HCT116 (cell line): ENCODE measurements at regions of chr7 and their contacts with region 1.

Region 1: DNA sequence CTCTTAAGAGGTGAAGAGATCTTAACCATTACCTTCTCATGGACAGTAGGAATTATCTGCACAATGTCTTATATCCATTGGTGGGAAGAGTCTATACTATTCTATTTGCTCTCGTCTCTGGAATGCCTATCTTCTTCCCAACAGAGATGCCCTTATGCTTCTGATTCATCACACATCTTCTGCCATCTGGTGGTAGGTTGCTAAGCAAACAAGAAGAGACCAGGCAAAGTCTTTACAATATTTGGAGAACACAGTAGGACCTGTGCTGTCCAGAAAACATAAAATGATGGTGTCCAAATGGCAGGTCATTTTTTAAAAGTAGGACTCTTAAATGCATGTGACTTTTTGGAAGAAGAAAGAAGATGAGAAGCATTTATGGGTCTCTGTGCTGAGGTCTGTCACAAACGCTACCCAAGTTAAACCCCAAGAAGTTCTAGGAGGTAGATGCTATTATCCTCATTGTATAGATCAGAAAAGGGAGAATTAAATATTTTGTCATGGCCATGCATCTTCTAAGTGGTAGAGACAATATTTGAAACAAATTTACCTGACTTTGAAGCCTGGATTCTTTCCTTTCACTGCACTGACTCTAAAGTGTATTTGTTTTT is 67.8 kb upstream of the NXPH1 start:
- DNase-seq: peak; percentile 35
- ATAC-seq: peak; percentile 95
- H3K4me3 ChIP-seq: no peak overlapping the region
- H3K27ac ChIP-seq: no peak overlapping the region
- H3K4me1 ChIP-seq: no peaks in the 10 kb centered on the region
- H3K27me3 ChIP-seq: no peaks in the 10 kb centered on the region
- CTCF ChIP-seq: peak; percentile 57 to 80 (median 65); a peak in 5 of 6 replicates
- POLR2A ChIP-seq: no peak
- RAD21 ChIP-seq: peak; percentile 73

Region 2: GRCh38 chr7:7595451-7595850 is 770.2 kb before region 1 on chr7:
- CTCF ChIA-PET with region 1: no interaction called
- POLR2A ChIA-PET with region 1: no interaction called
- RAD21 ChIA-PET with region 1: no interaction called
- intact Hi-C with region 1: loop called (anchors 2 kb)
- DNase-seq: peak; percentile 8
- ATAC-seq: no peak
- H3K4me3 ChIP-seq: no peak overlapping the region
- H3K27ac ChIP-seq: no peak overlapping the region
- H3K4me1 ChIP-seq: no peaks in the 10 kb centered on the region
- H3K27me3 ChIP-seq: no peaks in the 10 kb centered on the region
- CTCF ChIP-seq: peak in 2 of 3 experiments; percentile 38 to 53; a peak in 3 of 6 replicates
- POLR2A ChIP-seq: no peak
- RAD21 ChIP-seq: peak; percentile 65

Region 3: DNA sequence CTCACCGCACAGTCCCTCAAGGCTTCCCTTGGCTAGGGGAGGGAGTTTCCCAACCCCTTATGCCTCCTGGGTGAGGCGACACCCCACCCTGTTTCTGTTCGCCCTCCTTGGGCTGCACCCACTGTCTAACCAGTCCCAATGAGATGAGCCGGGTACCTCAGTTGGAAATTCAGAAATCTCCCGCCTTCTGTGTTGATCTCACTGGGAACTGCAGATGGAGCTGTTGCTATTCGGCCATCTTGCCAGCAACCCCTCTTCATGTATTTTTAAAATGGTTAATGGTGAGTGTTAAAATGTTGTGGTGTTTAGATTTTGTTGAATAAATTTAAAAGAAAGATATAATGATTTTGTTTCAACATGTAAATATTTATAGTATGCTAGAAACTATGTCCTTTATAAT is 703.1 kb before region 1 on chr7:
- CTCF ChIA-PET with region 1: no interaction called
- POLR2A ChIA-PET with region 1: no interaction called
- RAD21 ChIA-PET with region 1: no interaction called
- intact Hi-C with region 1: loop called (anchors 5 kb)
- DNase-seq: no peak
- ATAC-seq: peak; percentile 27; the same call in 1 of the 2 replicates
- H3K4me3 ChIP-seq: no peak overlapping the region
- H3K27ac ChIP-seq: no peak overlapping the region
- H3K4me1 ChIP-seq: no peaks in the 10 kb centered on the region
- H3K27me3 ChIP-seq: no peaks in the 10 kb centered on the region
- CTCF ChIP-seq: peak; percentile 37 to 47 (median 39); a peak in 5 of 6 replicates
- POLR2A ChIP-seq: no peak
- RAD21 ChIP-seq: peak; percentile 60

Region 4: DNA sequence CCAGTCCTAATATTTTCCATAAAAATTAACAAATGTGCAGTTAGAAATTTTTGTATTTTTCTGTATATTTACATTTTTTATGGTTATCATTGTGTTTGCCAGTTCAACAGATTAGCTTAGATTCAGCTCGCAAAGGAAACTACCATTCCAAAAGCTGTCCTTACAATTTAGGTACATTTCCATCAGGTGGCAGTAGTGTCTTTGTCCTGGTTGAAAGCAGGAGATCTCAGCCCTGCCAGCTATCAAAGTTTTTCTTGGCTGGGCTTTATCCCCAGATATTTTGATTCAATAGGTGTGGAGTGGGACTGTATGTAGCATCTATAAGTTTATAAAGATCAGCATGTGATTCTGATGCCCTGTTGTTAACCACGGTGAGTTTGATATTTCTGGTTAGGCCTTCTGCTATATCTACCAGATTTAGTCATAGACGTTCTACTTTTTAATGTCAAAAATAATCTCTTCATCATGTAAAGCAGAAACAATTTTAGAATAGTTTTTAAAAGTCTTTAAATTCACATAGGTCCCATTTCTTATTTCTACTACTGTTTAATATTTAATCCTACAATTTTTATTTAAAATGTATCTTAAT is 88.1 kb before region 1 on chr7:
- CTCF ChIA-PET with region 1: interaction called, 5 read pairs
- POLR2A ChIA-PET with region 1: no interaction called
- RAD21 ChIA-PET with region 1: no interaction called
- intact Hi-C with region 1: loop called (anchors 1 kb)
- DNase-seq: no peak
- ATAC-seq: peak; percentile 77
- H3K4me3 ChIP-seq: no peak overlapping the region
- H3K27ac ChIP-seq: no peak overlapping the region
- H3K4me1 ChIP-seq: no peaks in the 10 kb centered on the region
- H3K27me3 ChIP-seq: no peaks in the 10 kb centered on the region
- CTCF ChIP-seq: peak; percentile 46 to 60 (median 47); a peak in 5 of 6 replicates
- POLR2A ChIP-seq: no peak
- RAD21 ChIP-seq: peak; percentile 71